ENCODE measurements at regions of chr4 and their contacts with region 1.

Region 1: GRCh38 chr4:169566021-169566818 is 46.2 kb downstream of the NEK1 start:
- DNase-seq: peak; percentile 38
- ATAC-seq: peak; percentile 85
- H3K4me3 ChIP-seq: no peak overlapping the region
- H3K27ac ChIP-seq: no peak overlapping the region
- H3K4me1 ChIP-seq: no peaks in the 10 kb centered on the region
- H3K27me3 ChIP-seq: no peaks in the 10 kb centered on the region
- CTCF ChIP-seq: peak; percentile 57 to 81 (median 59); a peak in 5 of 6 replicates
- POLR2A ChIP-seq: no peak
- RAD21 ChIP-seq: peak; percentile 72

Region 2: GRCh38 chr4:168923526-168924194 is 642.6 kb before region 1 on chr4:
- CTCF ChIA-PET with region 1: no interaction called
- POLR2A ChIA-PET with region 1: no interaction called
- RAD21 ChIA-PET with region 1: no interaction called
- intact Hi-C with region 1: loop called (anchors 1 kb)
- DNase-seq: peak; percentile 61
- ATAC-seq: peak; percentile 84
- H3K4me3 ChIP-seq: no peak overlapping the region
- H3K27ac ChIP-seq: peak overlapping the region; percentile 17; the same call in 1 of the 2 replicates
- H3K4me1 ChIP-seq: no peaks in the 10 kb centered on the region
- H3K27me3 ChIP-seq: no peaks in the 10 kb centered on the region
- CTCF ChIP-seq: peak; percentile 63 to 83 (median 74)
- POLR2A ChIP-seq: no peak
- RAD21 ChIP-seq: peak; percentile 78

Region 3: GRCh38 chr4:169024762-169025161 is 541.5 kb before region 1 on chr4:
- CTCF ChIA-PET with region 1: no interaction called
- POLR2A ChIA-PET with region 1: no interaction called
- RAD21 ChIA-PET with region 1: no interaction called
- intact Hi-C with region 1: loop called (anchors 2 kb)
- DNase-seq: peak; percentile 15
- ATAC-seq: peak; percentile 93
- H3K4me3 ChIP-seq: no peak overlapping the region
- H3K27ac ChIP-seq: no peak overlapping the region
- H3K4me1 ChIP-seq: peaks cover 2 to 9% of the 10 kb centered on the region in 2 experiments; a peak in 3 of 4 replicates
- H3K27me3 ChIP-seq: no peaks in the 10 kb centered on the region
- CTCF ChIP-seq: peak; percentile 62 to 76 (median 63); a peak in 5 of 6 replicates
- POLR2A ChIP-seq: no peak
- RAD21 ChIP-seq: peak; percentile 94

Region 4: GRCh38 chr4:169582205-169582604 is 16.0 kb after region 1 on chr4:
- CTCF ChIA-PET with region 1: interaction called, 11 read pairs
- POLR2A ChIA-PET with region 1: no interaction called
- RAD21 ChIA-PET with region 1: no interaction called
- intact Hi-C with region 1: no loop called
- DNase-seq: no peak
- ATAC-seq: no peak
- H3K4me3 ChIP-seq: no peak overlapping the region
- H3K27ac ChIP-seq: no peak overlapping the region
- H3K4me1 ChIP-seq: no peaks in the 10 kb centered on the region
- H3K27me3 ChIP-seq: no peaks in the 10 kb centered on the region
- CTCF ChIP-seq: no peak
- POLR2A ChIP-seq: no peak
- RAD21 ChIP-seq: no peak

Region 5: GRCh38 chr4:169840554-169840953 is 274.3 kb after region 1 on chr4:
- CTCF ChIA-PET with region 1: no interaction called
- POLR2A ChIA-PET with region 1: no interaction called
- RAD21 ChIA-PET with region 1: no interaction called
- intact Hi-C with region 1: no loop called
- DNase-seq: no peak
- ATAC-seq: no peak
- H3K4me3 ChIP-seq: no peak overlapping the region
- H3K27ac ChIP-seq: no peak overlapping the region
- H3K4me1 ChIP-seq: no peaks in the 10 kb centered on the region
- H3K27me3 ChIP-seq: 0 out of 2 replicates have a peak, but pooled peaks cover 3% of the 10 kb centered on the region
- CTCF ChIP-seq: no peak
- POLR2A ChIP-seq: no peak
- RAD21 ChIP-seq: no peak